ENCODE measurements at regions of chr4 and their contacts with region 1.

Region 1: GRCh38 chr4:64158648-64159326 is 250.5 kb downstream of the TECRL start:
- DNase-seq: peak; percentile 69
- ATAC-seq: no peak
- H3K4me3 Mint-ChIP-seq: no peak overlapping the region
- H3K27ac Mint-ChIP-seq: no peak overlapping the region
- H3K4me1 Mint-ChIP-seq: no peaks in the 10 kb centered on the region
- H3K27me3 Mint-ChIP-seq: no peaks in the 10 kb centered on the region

Region 2: DNA sequence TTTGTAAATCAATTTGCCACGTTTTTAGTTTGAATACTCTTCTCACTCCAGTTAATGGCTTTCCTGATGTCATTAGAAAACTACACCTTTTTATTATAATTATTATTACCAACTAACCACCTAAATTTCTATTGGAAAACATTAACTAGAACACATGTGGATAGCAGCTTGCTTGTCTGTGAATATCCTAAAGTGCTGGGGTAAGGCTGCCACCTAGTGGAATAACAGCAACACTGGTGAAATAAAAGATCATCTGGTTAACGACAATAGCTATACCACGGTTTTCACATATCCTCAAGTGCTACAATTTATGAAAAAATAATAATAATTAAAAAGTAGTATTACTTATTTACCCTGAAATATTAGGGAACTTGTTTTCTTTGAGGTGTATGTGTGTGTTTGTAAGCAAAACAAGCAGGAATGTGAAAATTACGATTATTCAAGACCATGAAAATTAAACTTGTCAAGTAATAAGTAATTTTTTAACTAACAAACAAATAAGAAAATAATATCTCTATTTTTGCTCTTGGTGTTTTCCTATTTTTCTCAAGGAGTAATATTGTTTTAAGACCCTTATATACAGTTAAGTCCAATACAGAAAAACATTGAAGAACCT is 380.6 kb after region 1 on chr4:
- CTCF ChIA-PET with region 1: interaction called, 12 read pairs
- POLR2A ChIA-PET with region 1: no interaction called
- DNase-seq: peak; percentile 55
- ATAC-seq: no peak
- H3K4me3 Mint-ChIP-seq: no peak overlapping the region
- H3K27ac Mint-ChIP-seq: no peak overlapping the region
- H3K4me1 Mint-ChIP-seq: no peaks in the 10 kb centered on the region
- H3K27me3 Mint-ChIP-seq: no peaks in the 10 kb centered on the region

Measured in activated CD8-positive, alpha-beta T cell treated with anti-CD3 and anti-CD28 coated beads, Interleukin-2, amount 10 ng/mL, durations not matched to agents 7 days and 5 days (primary cell).